ENCODE measurements at regions of chr19 and their contacts with region 1.

Region 1: DNA sequence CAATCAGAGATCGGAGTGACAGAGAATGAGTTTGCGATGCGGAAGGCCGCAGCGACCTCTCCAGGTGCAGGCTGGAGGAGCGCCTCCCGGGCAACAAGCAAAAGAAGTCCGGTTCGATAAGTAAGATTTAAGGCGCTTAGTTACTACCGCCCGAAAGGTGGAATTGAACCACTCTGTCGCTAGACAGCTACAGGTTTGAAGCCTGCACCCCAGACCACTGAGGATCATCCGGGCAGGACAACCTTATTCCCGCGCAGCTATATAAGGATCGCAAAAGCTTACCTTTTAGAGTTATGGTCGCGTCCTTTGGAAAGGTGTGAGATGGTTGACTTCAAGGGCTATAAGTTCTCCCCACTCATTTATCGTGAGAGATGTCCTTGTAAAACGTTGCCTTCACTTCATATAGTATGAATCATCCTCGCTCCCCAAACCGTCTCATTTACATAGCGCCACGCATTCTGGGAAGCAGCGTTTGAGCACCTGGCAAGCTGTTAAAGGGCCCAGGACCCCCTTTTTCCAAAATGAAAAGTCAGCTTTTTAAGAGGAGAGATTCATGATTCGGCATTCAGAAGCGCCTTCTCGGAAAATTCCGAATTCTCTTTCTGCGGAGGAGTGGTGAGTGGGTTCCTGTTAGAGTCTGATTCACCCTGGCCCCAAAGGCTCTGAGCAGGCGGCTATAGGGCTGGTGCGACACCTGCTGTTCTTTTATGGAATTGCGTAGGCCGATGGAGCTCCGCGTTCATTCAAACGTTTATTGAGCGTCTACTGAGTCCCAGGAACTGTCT is 10.8 kb downstream of the FOSB start:
- DNase-seq: peak; percentile 75 to 87 (median 84)
- H3K4me3 ChIP-seq: peak overlapping the region; percentile 34 to 78 (median 59)
- H3K27ac ChIP-seq: peak overlapping the region; percentile 87 to 100 (median 97)
- H3K27me3 ChIP-seq: peaks cover 0 to 8% (median 0%) of the 10 kb centered on the region in 45 donors
- CTCF ChIP-seq: peak; percentile 89 to 100 (median 97)

Region 2: DNA sequence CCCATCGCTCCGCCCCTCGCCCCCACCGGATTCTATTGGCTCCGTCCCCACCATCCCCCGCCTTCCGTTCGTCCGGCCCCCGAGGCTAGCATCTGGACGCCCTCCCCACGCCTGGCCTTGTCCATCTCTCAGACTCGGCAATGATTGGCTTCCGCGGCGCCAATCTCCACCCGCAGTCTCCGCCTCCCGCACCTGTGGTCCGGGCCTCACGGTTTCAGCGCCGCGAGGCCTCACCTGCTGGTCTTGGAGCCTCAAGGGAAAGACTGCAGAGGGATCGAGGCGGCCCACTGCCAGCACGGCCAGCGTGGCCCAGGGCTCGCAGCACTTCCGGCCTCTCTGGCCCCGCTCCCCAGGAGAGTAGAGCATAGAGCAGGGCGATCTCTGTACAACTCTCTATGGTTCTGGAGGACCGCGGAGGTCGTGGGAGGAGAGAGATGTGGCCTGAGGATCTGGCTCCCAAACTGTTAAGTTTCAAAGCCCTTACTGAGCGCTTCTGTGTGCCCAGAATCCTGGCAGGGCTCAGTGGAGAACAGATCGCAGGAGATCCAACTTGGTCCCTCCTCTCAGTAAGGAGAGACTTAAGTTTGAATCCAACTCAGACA is 55.0 kb before region 1 on chr19 and contains the start of gene ERCC1:
- intact Hi-C with region 1: loop called (anchors 10 kb)
- DNase-seq: peak; percentile 78 to 94 (median 91)
- H3K4me3 ChIP-seq: peak within 1 kb of the TSS; percentile 52 to 93 (median 75)
- H3K27ac ChIP-seq: peak within 1 kb of the TSS; percentile 63 to 98 (median 90)
- H3K27me3 ChIP-seq: no peaks in the 10 kb centered on the region
- CTCF ChIP-seq: peak in 13 of 56 donors; percentile 0 to 30 (median 16)
- total RNA-seq, gene ERCC1: 64.1 to 99.4 (median 79.0) TPM

Region 3: GRCh38 chr19:45439569-45440254 is 38.9 kb before region 1 on chr19:
- intact Hi-C with region 1: loop called (anchors 1 kb)
- DNase-seq: peak; percentile 73 to 92 (median 84)
- H3K4me3 ChIP-seq: peak overlapping the region; percentile 41 to 89 (median 73)
- H3K27ac ChIP-seq: peak overlapping the region; percentile 72 to 100 (median 96)
- H3K27me3 ChIP-seq: no peaks in the 10 kb centered on the region
- CTCF ChIP-seq: peak; percentile 98 to 100 (median 100)

Measured in dorsolateral prefrontal cortex (tissue), 120 donors.